CD8-positive, alpha-beta T cell (primary cell): ENCODE measurements at regions of chr1 and their contacts with region 1.

Region 1: DNA sequence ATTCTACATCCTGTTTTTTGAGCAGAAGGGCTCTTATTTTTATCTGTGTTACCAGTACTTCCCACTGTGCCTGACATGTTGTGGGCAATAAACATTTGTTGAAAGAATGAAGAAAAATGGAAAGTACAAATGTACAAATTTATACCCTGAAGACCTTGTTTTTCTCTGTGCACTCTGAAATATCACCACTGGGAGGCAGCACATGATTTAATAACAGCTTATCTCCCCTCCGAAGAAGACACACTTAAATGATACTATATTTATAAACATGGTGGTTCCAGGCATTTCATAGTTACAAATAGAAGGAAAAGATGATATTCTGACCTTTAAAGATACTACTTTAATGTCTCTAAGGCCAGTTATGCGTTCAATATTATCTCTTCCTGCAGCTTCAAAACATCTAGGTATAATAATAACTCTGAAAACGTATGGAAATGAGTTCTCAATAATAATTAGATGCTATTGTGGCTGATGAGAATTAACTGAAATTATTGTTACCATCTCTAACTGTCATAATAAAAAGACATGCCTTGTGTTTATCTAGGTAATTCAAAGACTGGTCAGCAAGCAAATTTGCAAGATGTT is 12.8 kb downstream of the DYNLT5 start:
- DNase-seq: peak; percentile 5 to 73 (median 53)
- ATAC-seq: peak; percentile 83
- H3K4me3 ChIP-seq: no peak overlapping the region
- H3K4me3 Mint-ChIP-seq: no peak overlapping the region
- H3K27ac ChIP-seq: no peak overlapping the region
- H3K27ac Mint-ChIP-seq: no peak overlapping the region
- H3K4me1 ChIP-seq: no peaks in the 10 kb centered on the region
- H3K4me1 Mint-ChIP-seq: peaks cover 15% of the 10 kb centered on the region
- H3K27me3 ChIP-seq: no peaks in the 10 kb centered on the region
- H3K27me3 Mint-ChIP-seq: no peaks in the 10 kb centered on the region
- CTCF ChIP-seq: peak; percentile 84

Region 2: DNA sequence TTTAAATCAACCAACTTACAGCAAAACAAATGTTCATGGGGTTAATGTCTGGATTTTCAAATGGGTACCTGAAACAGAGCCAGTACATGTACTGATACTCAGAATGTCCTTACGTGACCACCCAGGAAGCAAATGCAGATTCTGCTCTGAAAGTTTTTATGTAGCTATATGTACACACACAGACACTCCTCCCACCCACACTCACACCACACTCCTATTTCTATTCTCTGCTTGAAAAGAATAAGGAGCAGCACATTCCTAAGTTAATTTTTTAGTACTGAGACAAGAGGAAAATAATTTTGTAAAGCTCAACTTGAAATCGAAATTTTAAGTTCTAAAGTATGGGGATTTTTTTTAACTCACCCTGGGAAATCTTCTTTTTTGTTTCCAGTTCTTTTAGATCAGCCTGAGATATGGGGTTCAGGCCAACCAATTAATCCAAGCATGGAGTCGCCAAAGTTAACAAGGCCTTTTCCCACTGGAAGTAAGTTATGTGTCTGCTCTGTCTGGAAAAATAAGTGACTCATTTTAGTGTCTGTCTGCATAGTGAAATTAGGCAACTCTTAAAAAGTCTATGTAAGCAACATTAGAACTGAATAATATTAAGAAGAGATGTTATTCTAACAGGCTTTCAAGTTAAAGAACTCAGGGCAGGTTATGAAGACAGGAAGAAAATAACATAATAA is 88.3 kb before region 1 on chr1:
- CTCF ChIA-PET with region 1: no interaction called
- POLR2A ChIA-PET with region 1: no interaction called
- intact Hi-C with region 1: no loop called
- DNase-seq: no peak
- ATAC-seq: no peak
- H3K4me3 ChIP-seq: no peak overlapping the region
- H3K4me3 Mint-ChIP-seq: no peak overlapping the region
- H3K27ac ChIP-seq: no peak overlapping the region
- H3K27ac Mint-ChIP-seq: no peak overlapping the region
- H3K4me1 ChIP-seq: no peaks in the 10 kb centered on the region
- H3K4me1 Mint-ChIP-seq: no peaks in the 10 kb centered on the region
- H3K27me3 ChIP-seq: no peaks in the 10 kb centered on the region
- H3K27me3 Mint-ChIP-seq: no peaks in the 10 kb centered on the region
- CTCF ChIP-seq: no peak

Region 3: GRCh38 chr1:66924756-66925557 is 159.9 kb after region 1 on chr1 and contains the starts of genes DNAI4 and MIER1:
- CTCF ChIA-PET with region 1: interaction called, 4 read pairs
- POLR2A ChIA-PET with region 1: interaction called, 3 read pairs
- intact Hi-C with region 1: loop called (anchors 1 to 5 kb)
- DNase-seq: peak; percentile 93 to 98 (median 96)
- ATAC-seq: peak; percentile 91
- H3K4me3 ChIP-seq: peak within 1 kb of the TSS; percentile 80 to 99
- H3K4me3 Mint-ChIP-seq: peak within 1 kb of the TSS; percentile 96
- H3K27ac ChIP-seq: peak within 1 kb of the TSS; percentile 95 to 100
- H3K27ac Mint-ChIP-seq: peak within 1 kb of the TSS; percentile 93
- H3K4me1 ChIP-seq: peaks cover 25% of the 10 kb centered on the region
- H3K4me1 Mint-ChIP-seq: peaks cover 46% of the 10 kb centered on the region
- H3K27me3 ChIP-seq: no peaks in the 10 kb centered on the region
- H3K27me3 Mint-ChIP-seq: no peaks in the 10 kb centered on the region
- CTCF ChIP-seq: no peak
- total RNA-seq, gene DNAI4: 4.9 to 5.1 TPM
- total RNA-seq, gene MIER1: 94.5 to 96.5 TPM

Region 4: GRCh38 chr1:66981679-66982078 is 216.6 kb after region 1 on chr1:
- CTCF ChIA-PET with region 1: interaction called, 6 read pairs
- POLR2A ChIA-PET with region 1: no interaction called
- intact Hi-C with region 1: loop called (anchors 5 kb)
- DNase-seq: peak; percentile 18 to 86 (median 52)
- ATAC-seq: peak; percentile 96
- H3K4me3 ChIP-seq: peak overlapping the region; percentile 38 to 48
- H3K4me3 Mint-ChIP-seq: peak overlapping the region; percentile 75
- H3K27ac ChIP-seq: peak overlapping the region; percentile 44 to 78
- H3K27ac Mint-ChIP-seq: peak overlapping the region; percentile 79
- H3K4me1 ChIP-seq: peaks cover 22% of the 10 kb centered on the region
- H3K4me1 Mint-ChIP-seq: peaks cover 30% of the 10 kb centered on the region
- H3K27me3 ChIP-seq: no peaks in the 10 kb centered on the region
- H3K27me3 Mint-ChIP-seq: no peaks in the 10 kb centered on the region
- CTCF ChIP-seq: no peak

Region 5: GRCh38 chr1:66996018-66996682 is 231.1 kb after region 1 on chr1:
- CTCF ChIA-PET with region 1: interaction called, 27 read pairs
- POLR2A ChIA-PET with region 1: interaction called, 3 read pairs
- intact Hi-C with region 1: loop called (anchors 1 kb)
- DNase-seq: peak; percentile 29 to 74 (median 57)
- ATAC-seq: peak; percentile 86
- H3K4me3 ChIP-seq: no peak overlapping the region
- H3K4me3 Mint-ChIP-seq: no peak overlapping the region
- H3K27ac ChIP-seq: no peak overlapping the region
- H3K27ac Mint-ChIP-seq: peak overlapping the region; percentile 32
- H3K4me1 ChIP-seq: peaks cover 5% of the 10 kb centered on the region
- H3K4me1 Mint-ChIP-seq: peaks cover 21% of the 10 kb centered on the region
- H3K27me3 ChIP-seq: no peaks in the 10 kb centered on the region
- H3K27me3 Mint-ChIP-seq: no peaks in the 10 kb centered on the region
- CTCF ChIP-seq: peak; percentile 70